Heart right ventricle (tissue), 16 donors: ENCODE measurements at regions of chr2 and their contacts with region 1.

Region 1: DNA sequence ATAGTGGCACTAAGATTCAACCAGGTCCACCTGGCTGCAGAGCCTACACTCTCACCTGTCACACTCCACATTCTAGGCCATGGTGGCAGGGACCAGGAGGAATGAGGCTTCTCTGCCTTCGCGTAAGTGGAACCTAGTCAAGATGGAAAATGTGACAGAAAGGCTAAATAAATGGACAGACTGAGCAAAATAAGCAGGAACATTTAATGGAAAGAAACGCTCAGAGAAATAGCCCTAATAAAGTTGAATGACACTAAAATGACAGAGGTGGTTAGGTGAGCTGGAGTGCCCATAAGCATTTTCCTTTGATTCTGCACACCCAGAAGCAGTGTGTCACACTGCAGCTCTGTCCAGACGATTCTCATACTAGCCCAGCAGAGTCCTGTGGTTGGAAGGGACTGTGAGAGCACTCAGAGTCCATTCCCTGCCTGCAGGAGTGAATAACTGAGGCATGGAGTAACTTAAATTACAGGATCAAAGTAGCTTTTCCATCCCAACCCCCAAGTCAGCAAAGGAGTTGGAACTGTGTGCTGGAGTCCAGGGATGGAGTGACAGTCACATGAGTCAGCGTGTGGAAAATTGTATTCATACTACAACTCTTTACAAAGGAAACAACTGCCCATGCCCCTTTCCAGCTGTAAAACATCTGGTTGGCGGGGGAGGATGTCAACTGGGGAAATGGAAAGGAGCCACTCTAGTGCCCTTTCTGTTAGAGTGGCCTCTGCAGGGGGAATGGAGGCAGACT is 105.4 kb upstream of the LGALSL start:
- DNase-seq: no peak
- ATAC-seq: no peak
- H3K4me3 ChIP-seq: no peak overlapping the region
- H3K27ac ChIP-seq: no peak overlapping the region
- H3K4me1 ChIP-seq: no peaks in the 10 kb centered on the region
- H3K27me3 ChIP-seq: no peaks in the 10 kb centered on the region
- CTCF ChIP-seq: no peak

Region 2: DNA sequence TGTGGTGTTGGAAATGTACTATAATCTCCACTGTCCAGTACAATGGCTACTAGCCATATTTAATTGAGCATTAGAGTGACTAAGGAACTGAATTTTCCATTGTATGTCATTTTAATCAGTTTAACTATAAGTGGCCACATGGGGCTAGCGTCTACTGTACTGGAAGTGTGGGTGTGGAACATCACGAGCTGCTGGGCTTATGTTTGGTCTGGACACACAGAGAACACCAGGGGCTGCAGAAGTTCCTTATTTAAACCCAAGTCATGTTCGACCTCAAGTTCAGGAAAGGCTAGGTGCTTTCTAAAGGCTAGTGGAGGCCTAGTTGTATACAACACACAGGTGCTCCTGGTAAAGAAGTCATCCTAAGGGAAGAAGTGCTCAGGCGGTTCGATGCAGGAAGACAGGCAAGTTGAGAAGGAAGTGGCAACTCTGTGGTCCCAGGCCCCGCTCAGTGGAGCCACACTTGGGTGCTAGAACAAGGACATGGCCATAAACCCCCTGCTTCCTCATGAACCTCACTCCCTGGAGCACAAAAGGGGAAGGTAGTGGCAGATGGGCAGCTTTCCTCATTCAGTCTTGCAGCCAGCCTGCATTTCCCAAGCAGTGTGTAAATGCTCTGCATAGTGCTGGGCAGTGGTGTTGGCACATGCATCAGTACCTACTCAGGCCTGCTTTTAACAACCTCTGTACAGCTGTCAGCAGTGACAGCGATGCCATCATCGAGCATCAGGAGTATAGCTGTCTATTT is 118.7 kb after region 1 on chr2:
- intact Hi-C with region 1: loop called in 1 of 10 experiments (anchors 5 kb)
- DNase-seq: no peak
- ATAC-seq: peak in 5 of 8 donors; percentile 28 to 65 (median 45)
- H3K4me3 ChIP-seq: no peak overlapping the region
- H3K27ac ChIP-seq: no peak overlapping the region
- H3K4me1 ChIP-seq: peaks cover 0 to 14% (median 0%) of the 10 kb centered on the region in 9 donors
- H3K27me3 ChIP-seq: no peaks in the 10 kb centered on the region
- CTCF ChIP-seq: no peak